ENCODE measurements at regions of chr14 and their contacts with region 1.

Region 1: DNA sequence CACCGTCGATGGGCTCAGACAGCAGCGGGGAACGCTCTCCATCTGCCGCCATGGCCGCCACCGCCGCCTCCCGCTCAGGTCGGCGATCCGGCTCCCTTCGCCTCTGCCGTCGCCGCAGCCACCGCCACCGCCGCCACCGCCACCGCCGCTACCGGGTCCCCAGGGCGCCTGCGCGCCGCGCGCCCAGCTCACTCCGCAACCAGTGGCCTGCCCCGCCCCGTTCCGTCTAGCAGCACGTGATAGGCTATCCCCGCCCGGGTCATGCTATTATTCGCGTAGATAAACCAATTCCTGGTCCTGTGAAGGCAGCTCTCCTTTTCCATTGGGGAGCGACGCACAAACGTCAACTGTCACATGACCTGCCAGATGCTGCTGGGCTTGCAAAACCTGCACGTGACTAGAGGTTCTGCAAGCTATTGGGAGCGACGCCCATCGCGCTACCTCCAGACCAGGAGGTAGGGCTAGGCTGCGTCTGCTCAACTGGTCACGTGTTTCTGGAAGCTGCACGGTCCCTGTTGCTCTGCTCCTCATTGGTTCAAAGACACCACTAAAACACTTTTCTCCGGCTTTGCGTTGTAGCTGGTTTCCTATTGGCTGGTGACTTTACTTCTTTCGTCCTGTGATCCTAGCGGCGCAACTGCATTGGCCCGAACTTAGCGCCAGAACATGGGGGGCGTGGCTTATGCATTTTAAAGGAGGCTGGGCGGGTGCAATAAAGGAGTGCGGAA is at the start of gene PIP4P1:
- DNase-seq: peak; percentile 94
- CTCF ChIP-seq: no peak

Region 2: DNA sequence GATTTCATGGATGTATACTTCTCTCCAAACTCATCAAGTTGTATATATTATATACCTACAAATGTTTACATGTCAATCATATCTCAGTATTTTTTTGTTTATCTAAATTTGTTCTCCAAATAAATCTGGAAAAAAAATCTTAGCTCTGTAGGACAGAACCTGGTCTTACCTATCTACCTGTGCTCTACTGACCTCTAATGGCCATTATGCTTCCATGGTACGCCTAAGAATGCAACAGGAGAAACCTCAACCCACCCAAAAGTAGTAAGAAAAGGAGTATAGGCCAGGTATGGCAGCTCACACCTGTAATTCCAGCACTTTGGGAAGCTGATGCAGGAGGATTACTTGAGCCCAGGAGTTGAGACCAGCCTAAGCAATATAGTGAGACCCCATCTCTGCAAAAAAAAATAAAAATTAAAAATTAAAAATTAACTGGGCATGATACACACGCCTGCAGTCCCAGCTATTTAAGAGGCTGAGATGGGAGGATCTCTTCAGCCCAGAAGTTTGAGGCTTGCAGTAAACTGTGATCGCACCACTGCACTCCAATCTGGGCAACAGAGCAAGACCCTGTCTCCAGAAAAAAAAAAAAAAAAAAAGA is 213.7 kb before region 1 on chr14:
- in situ Hi-C with region 1: no loop called
- DNase-seq: no peak
- CTCF ChIP-seq: peak; percentile 38

Region 3: GRCh38 chr14:20332788-20333493 is 128.5 kb before region 1 on chr14 and contains the start of gene CCNB1IP1:
- in situ Hi-C with region 1: loop called (anchors 10 kb)
- DNase-seq: peak; percentile 85
- CTCF ChIP-seq: no peak

Measured in GM13977 (cell line).